HEK293 (cell line): ENCODE measurements at regions of chr15 and their contacts with region 1.

Region 1: DNA sequence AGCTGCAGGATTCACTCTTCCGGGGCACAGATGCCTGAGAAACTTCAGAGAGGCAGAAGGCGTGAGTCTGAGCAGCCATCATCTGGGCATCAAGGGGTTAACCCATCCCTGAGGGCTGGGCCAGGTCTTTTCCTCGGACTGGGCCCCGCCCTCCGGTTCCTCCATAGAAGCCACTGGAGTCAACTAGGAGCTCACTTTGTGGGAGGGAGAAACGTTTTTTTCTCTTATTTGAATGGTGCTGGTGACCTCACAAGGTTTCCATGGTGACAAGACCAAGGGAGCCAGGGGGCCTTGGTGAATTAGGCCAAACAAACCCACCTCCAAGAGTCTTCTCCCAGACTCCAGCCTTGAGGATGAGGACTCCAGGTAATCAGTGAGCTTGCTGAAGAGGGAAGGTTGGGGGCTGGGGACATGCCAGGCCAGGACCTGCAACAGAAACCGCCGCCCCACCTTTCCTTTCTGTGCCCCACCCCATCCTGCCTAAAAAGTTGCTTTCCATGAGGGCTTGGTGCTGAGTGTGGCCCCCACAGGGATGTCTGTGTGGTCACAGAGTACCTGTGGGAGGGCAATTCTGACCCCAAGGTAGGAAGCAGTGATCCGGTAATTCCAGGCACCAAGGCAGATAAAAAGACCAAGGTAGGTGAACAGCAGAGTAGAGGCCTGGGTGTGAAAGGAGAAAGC is 14.8 kb upstream of the INSYN1 start:
- H3K4me3 ChIP-seq: no peak overlapping the region
- H3K27ac ChIP-seq: no peak overlapping the region
- H3K4me1 ChIP-seq: no peaks in the 10 kb centered on the region
- CTCF ChIP-seq: no peak

Region 2: DNA sequence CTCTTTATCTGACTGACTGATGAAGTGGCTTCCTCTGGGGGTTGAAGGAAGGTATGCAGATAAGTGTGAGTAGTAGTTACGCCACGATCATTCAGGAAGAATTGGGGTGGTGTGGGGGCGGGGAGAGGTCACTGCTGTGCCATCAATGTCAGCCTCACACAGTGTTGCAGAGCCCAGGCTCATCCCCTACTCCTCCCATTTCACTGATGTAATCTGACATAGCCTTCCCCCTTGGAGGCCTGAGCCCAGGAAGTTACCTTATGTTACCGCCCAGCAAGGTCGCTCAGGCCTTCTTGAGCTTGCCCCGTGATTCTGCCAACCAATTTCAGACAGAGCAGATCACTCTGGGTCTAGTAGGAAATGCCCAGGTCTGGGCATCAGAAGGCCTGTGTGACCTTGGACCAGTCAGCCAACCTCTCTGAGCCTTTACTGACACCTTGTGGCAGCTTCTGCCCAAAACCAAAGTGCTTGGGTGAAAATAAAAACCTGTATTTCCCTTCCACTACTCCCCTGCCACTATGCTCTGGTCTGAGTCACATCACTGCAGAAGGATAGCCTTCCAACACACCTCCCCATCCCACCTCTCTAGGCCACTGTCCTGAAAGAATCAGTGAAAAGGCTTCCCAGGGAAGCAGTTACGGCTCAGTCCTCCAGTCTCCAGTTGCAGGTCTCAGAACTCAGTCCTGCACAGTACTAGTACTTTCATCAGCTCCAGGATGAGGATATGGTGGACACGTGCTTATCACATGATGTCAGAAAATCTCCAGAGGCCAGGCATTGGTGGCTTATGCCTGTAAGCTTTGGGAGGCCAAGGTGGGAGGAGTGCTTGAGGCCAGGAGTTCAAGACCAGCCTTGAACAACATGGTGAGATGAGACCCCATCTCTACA is 13.3 kb after region 1 on chr15:
- CTCF ChIA-PET with region 1: interaction called, 11 read pairs
- POLR2A ChIA-PET with region 1: no interaction called
- H3K4me3 ChIP-seq: no peak overlapping the region
- H3K27ac ChIP-seq: no peak overlapping the region
- H3K4me1 ChIP-seq: no peaks in the 10 kb centered on the region
- CTCF ChIP-seq: peak; percentile 70; the same call in 1 of the 2 replicates